K562 (cell line): ENCODE measurements at regions of chr9 and their contacts with region 1.

Region 1: DNA sequence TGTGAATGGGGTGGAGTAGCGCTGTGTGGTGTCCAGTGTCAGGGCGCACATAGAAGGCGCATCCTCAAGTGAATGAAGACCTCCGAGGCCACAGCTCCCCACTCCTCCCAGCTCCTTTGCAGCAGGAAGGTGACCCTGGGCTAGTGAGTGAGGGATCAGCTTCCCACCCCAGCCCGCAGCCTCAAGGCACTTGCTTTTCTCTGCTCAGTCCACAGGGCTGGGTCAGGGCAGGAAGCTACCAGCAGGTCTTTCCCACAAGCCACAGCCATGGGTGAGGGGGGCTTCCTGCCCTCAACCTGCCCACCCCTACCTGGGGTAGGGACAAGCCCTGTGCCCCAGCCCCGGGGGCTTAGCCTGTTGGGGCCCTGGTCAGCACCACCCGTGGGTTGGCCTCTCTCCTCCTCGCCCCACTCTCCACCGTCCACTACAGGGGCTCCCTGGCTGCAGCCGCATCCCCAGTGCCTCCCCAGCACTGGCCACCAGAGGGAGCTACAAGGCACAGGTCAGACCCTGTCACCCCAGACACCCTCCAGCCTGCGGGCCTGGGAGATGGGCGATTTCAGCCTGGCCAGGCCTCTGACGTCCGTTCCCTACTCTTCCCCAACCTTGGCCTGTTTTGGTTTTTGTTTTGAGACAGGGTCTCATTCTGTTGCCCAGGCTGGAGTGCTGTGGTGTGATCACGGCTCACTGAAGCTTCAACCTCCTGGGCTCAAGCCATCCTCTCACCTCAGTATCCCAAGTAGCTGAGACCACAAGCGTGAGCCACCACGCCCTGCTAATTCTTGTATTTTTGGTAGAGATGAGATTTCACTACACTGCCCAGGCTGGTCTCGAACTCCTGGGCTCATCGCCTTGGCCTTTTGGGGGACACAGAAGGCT is 1.3 kb upstream of the ABCA2 start:
- DNase-seq: peak; percentile 78 to 89 (median 80)
- ATAC-seq: peak; percentile 93
- H3K4me3 ChIP-seq: peak overlapping the region; percentile 66
- H3K27ac ChIP-seq: no peak overlapping the region
- H3K4me1 ChIP-seq: peaks cover 9 to 84% of the 10 kb centered on the region in 2 experiments; a peak in 4 of 5 replicates
- H3K27me3 ChIP-seq: no peaks in the 10 kb centered on the region
- CTCF ChIP-seq: peak; percentile 89 to 92 (median 90)
- EP300 ChIP-seq: no peak; the same call in 1 of the 2 replicates
- POLR2A ChIP-seq: no peak
- RAD21 ChIP-seq: peak; percentile 15 to 49; a peak in 3 of 4 replicates

Region 2: DNA sequence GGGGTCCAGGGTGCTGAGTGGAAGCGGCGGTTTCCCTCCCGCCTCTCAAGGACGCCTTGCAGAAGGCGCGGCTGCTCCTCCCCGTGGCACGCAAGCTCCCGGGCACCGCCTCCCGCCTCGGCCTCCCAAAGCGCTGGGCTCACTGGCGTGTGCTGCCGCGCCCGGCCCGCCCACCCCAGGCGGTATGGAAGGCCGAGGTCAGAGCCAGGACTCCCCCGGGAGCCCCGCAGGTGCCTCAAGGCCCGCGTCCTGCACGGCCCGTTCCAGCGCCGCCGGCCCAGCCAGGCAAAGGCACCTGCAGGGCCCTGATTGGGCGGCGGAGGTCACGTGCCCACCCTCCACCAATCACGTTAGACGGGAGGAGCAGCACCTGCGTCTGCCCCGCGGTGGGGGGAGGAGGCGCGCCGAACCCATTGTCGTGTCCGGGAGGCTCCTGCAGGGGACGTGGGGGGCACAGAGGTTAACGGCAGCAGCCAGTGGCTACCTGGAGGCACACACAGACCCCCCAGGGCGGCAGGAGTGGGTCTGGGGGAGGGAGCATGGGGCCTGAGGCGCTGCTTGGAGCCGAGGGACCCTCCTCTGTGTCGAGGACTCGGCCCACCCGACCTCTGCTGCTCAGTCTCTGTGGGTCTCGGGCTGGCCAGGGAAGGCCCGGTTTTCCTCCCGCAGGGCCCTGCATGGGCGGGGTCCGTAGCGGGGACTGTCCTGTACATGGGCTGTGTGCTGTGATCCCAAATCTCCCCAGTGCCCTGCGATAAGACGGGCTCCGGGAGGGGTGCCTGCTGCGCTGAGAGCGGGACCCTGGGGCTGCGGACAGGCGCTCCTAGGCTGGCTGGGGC is 79.3 kb before region 1 on chr9:
- CTCF ChIA-PET with region 1: interaction called, 47 read pairs
- POLR2A ChIA-PET with region 1: interaction called, 3 read pairs
- in situ Hi-C with region 1: no loop called
- intact Hi-C with region 1: loop called (anchors 2 kb)
- DNase-seq: peak; percentile 97 to 100 (median 100)
- ATAC-seq: peak; percentile 94
- H3K4me3 ChIP-seq: peak overlapping the region; percentile 51
- H3K27ac ChIP-seq: peak overlapping the region; percentile 46; the same call in 2 of the 3 replicates
- H3K4me1 ChIP-seq: peaks cover 13 to 82% of the 10 kb centered on the region in 2 experiments
- H3K27me3 ChIP-seq: peaks cover 0 to 2% of the 10 kb centered on the region in 2 experiments; a peak in 1 of 5 replicates
- CTCF ChIP-seq: peak in 2 of 3 experiments; percentile 29 to 35; a peak in 4 of 6 replicates
- EP300 ChIP-seq: no peak
- POLR2A ChIP-seq: peak; percentile 67
- RAD21 ChIP-seq: no peak; a peak in 2 of 4 replicates

Region 3: DNA sequence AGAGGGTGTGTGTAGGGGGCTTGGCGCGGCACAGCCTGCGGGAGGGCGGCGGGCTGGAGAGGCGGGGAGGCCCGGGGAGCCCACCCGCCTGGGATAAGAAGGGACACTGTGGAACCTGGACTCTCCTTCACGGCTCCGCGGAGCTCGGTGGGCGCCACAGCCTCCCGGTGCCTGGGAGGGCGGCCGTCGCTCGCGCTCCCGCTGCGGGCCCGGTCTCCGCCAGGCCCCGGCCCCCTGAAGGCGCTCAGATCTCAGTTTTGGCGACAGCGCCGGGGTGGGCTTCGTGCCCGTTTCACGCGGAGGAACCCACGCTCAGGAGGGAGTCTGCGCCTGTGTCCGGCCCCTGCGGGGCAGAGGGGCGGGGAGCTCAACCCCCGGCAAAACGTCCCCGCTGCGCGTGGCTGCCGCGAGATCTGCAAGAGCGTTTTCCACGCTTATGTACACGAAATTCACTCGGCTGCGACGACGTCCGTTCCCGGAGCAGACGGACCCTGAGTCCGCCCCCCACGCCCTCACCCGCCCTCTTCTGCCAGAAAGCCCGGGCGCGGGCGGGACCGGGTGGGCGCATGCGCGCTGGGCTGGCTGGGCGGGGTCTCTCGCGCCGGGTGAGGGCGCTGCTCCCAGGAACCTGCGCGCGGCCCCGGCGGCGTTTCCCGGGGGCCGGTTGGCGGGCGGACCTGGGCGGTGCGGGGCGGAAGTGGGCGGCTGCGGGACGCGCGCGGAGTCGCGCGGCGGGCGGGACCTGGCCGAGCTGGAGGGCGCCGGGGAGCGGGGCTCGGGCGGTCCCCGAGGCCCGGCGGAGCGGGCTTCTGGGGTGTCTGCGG is 225.5 kb after region 1 on chr9 and contains the start of gene NELFB:
- CTCF ChIA-PET with region 1: no interaction called
- POLR2A ChIA-PET with region 1: no interaction called
- in situ Hi-C with region 1: no loop called
- intact Hi-C with region 1: no loop called
- DNase-seq: peak; percentile 94 to 99 (median 98)
- ATAC-seq: peak; percentile 82
- H3K4me3 ChIP-seq: peak within 1 kb of the TSS; percentile 100
- H3K27ac ChIP-seq: peak within 1 kb of the TSS; percentile 84
- H3K4me1 ChIP-seq: peaks cover 13 to 68% of the 10 kb centered on the region in 2 experiments
- H3K27me3 ChIP-seq: no peaks in the 10 kb centered on the region
- CTCF ChIP-seq: 0 out of 6 replicates have a peak, but pooled peaks of 1 of the 3 experiments have one; percentile 7
- EP300 ChIP-seq: no peak
- POLR2A ChIP-seq: peak; percentile 85
- RAD21 ChIP-seq: no peak
- polyA plus RNA-seq, gene NELFB: 0.24 to 0.49 TPM